MCF 10A (cell line): ENCODE measurements at regions of chrX and their contacts with region 1.

Region 1: GRCh38 chrX:29231800-29232199 is 644.6 kb downstream of the IL1RAPL1 start:
- DNase-seq: peak; percentile 4
- H3K4me3 Mint-ChIP-seq: no peak overlapping the region
- H3K27ac Mint-ChIP-seq: no peak overlapping the region
- H3K4me1 Mint-ChIP-seq: no peaks in the 10 kb centered on the region
- H3K27me3 Mint-ChIP-seq: peaks cover 12% of the 10 kb centered on the region
- CTCF ChIP-seq: peak; percentile 19

Region 2: GRCh38 chrX:28773807-28774206 is 458.0 kb before region 1 on chrX:
- CTCF ChIA-PET with region 1: no interaction called
- POLR2A ChIA-PET with region 1: no interaction called
- intact Hi-C with region 1: no loop called
- DNase-seq: no peak
- H3K4me3 Mint-ChIP-seq: no peak overlapping the region
- H3K27ac Mint-ChIP-seq: no peak overlapping the region
- H3K4me1 Mint-ChIP-seq: no peaks in the 10 kb centered on the region
- H3K27me3 Mint-ChIP-seq: no peaks in the 10 kb centered on the region
- CTCF ChIP-seq: no peak

Region 3: DNA sequence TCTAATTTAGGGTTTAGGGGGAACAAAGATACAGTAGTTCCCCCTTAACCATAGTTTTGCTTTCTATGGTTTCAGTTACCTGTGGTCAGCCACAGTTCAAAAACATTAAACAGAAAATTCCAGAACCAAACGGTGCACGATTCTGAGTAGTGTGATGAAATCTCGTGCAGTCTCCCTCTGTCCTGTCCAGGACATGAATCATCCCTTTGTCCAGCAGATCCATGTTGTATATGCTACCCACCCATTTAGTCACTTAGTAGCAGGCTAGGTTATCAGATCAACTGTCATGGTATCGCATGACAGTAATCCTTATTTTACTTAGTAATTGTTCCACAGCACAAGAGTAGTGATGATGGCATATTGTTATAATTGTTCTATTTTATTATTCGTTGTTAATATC is 88.4 kb before region 1 on chrX:
- CTCF ChIA-PET with region 1: no interaction called
- POLR2A ChIA-PET with region 1: no interaction called
- intact Hi-C with region 1: no loop called
- DNase-seq: peak; percentile 26
- H3K4me3 Mint-ChIP-seq: no peak overlapping the region
- H3K27ac Mint-ChIP-seq: no peak overlapping the region
- H3K4me1 Mint-ChIP-seq: no peaks in the 10 kb centered on the region
- H3K27me3 Mint-ChIP-seq: no peaks in the 10 kb centered on the region
- CTCF ChIP-seq: no peak

Region 4: GRCh38 chrX:29376584-29376983 is 144.8 kb after region 1 on chrX:
- CTCF ChIA-PET with region 1: no interaction called
- POLR2A ChIA-PET with region 1: no interaction called
- intact Hi-C with region 1: no loop called
- DNase-seq: no peak
- H3K4me3 Mint-ChIP-seq: no peak overlapping the region
- H3K27ac Mint-ChIP-seq: no peak overlapping the region
- H3K4me1 Mint-ChIP-seq: no peaks in the 10 kb centered on the region
- H3K27me3 Mint-ChIP-seq: no peaks in the 10 kb centered on the region
- CTCF ChIP-seq: no peak

Region 5: DNA sequence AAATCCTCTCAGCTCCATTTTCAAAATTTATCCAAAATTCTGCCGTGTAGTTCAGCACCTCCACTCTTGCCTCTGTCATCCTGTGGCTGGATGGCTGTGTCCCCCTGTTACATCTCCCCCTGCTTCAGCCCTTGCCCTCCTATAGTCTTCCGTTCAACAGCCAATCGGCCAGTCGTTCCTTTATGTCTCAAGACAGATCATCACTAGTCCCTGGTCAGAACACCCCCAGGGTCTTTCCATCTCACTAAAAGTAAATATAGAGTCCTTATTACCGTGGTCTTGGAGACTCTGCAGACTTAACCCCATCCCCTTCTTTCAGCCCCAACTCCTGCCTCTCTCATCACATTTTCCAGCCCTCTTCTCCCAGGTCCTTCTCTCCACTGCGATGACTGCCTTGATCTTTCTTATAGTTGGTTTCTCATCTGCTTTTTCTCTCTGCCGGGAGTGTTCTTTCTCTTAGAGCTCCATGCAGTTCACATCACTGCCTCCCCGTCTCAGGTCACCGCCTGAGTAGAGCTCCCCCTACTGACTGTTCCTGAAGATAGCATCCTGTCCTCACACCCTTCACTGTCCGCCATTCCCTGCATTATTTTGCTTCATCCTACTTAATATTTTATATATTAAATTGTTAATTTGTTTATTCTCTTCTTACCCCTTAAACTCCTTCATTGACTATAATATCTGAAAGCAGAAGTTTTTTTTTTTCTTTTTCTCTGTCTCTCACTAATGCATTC is 246.7 kb after region 1 on chrX:
- CTCF ChIA-PET with region 1: no interaction called
- POLR2A ChIA-PET with region 1: no interaction called
- intact Hi-C with region 1: loop called (anchors 10 kb)
- DNase-seq: peak; percentile 56
- H3K4me3 Mint-ChIP-seq: no peak overlapping the region
- H3K27ac Mint-ChIP-seq: no peak overlapping the region
- H3K4me1 Mint-ChIP-seq: peaks cover 6% of the 10 kb centered on the region
- H3K27me3 Mint-ChIP-seq: peaks cover 25% of the 10 kb centered on the region
- CTCF ChIP-seq: peak; percentile 71

Region 6: GRCh38 chrX:29707088-29707487 is 475.3 kb after region 1 on chrX:
- CTCF ChIA-PET with region 1: no interaction called
- POLR2A ChIA-PET with region 1: no interaction called
- intact Hi-C with region 1: no loop called
- DNase-seq: no peak
- H3K4me3 Mint-ChIP-seq: no peak overlapping the region
- H3K27ac Mint-ChIP-seq: no peak overlapping the region
- H3K4me1 Mint-ChIP-seq: no peaks in the 10 kb centered on the region
- H3K27me3 Mint-ChIP-seq: no peaks in the 10 kb centered on the region
- CTCF ChIP-seq: no peak